ENCODE measurements at regions of chr9 and their contacts with region 1.

Region 1: DNA sequence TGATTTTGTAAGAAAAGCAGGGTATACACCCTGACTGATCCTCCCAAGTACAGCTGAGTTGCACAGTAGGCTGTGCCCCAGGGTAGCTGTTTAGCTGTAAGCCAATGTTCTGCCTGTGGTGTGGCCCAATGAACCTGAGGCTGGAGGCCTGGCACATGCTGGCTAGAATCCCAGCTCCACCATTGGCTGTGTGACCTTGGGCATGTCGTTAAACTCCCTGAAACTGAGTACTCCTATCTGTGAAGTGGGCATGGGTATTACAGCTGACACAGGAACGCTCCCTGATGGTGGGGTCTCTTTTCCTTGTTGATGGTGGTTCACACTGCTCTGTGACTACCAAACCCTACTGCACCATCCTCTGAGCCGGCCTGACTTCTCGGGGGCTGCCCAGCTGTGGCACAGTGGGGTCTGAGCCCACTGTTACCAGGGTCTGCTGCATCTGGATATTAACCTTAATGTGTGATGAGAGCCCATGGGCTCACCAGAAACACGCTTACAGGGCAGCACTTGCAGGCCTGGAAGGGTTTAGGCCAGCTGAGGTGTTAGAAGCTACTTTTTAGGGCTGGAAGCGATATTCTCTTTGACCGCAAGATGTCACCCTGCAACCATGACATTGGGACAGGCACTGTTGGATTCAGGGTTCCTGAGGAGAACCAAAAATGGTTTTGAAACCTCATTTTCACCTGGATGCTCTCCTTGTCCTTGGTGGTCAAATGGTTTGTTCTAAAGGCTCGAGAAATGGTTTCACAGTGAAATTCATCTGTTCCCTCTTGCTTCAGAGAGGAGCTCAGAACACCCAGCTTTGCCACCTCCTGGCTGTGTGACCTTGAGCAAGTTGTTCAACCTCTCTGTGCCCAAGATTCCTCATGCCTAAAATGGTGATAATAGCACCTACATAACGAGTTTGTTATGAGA is 6.8 kb upstream of the GADD45G start:
- DNase-seq: peak in 6 of 10 donors; percentile 38 to 79 (median 61)

Region 2: GRCh38 chr9:90099262-90099963 is 501.4 kb after region 1 on chr9:
- intact Hi-C with region 1: loop called (anchors 1 kb)
- DNase-seq: no peak

Region 3: GRCh38 chr9:90870621-90871326 is 1272.8 kb after region 1 on chr9:
- intact Hi-C with region 1: loop called (anchors 10 kb)
- DNase-seq: peak in 2 of 10 donors; percentile 19 to 34

Measured in posterior cingulate gyrus (tissue), 11 donors.